Tibial artery (tissue), 4 donors: ENCODE measurements at regions of chr12 and their contacts with region 1.

Region 1: GRCh38 chr12:119949145-119949544 is 39.9 kb upstream of the BICDL1 start:
- DNase-seq: no peak
- H3K4me3 ChIP-seq: no peak overlapping the region
- H3K27ac ChIP-seq: no peak overlapping the region
- H3K4me1 ChIP-seq: no peaks in the 10 kb centered on the region
- H3K27me3 ChIP-seq: peaks cover 0 to 2% of the 10 kb centered on the region in 2 donors
- CTCF ChIP-seq: no peak

Region 2: GRCh38 chr12:119843100-119843499 is 106.0 kb before region 1 on chr12:
- intact Hi-C with region 1: loop called (anchors 5 kb)
- DNase-seq: no peak
- H3K4me3 ChIP-seq: no peak overlapping the region
- H3K27ac ChIP-seq: no peak overlapping the region
- H3K4me1 ChIP-seq: no peaks in the 10 kb centered on the region
- H3K27me3 ChIP-seq: no peaks in the 10 kb centered on the region
- CTCF ChIP-seq: no peak